Activated T-helper 1 cell treated with anti-CD3 and anti-CD28 coated beads, Interleukin-12 subunit alpha, Interleukin-12 subunit beta, Interleukin-2, Interleukin-4 antibody, amounts not matched to agents 30 ng/mL and 10 ng/mL and 1 ng/mL, durations not matched to agents 14 hours and 24 hours and 36 hours (primary cell): ENCODE measurements at regions of chr13 and their contacts with region 1.

Region 1: GRCh38 chr13:40922437-40923040 is 96.6 kb downstream of the ELF1 start:
- DNase-seq: no peak
- H3K4me3 Mint-ChIP-seq: peak overlapping the region; percentile 77
- H3K27ac Mint-ChIP-seq: peak overlapping the region; percentile 70
- H3K4me1 Mint-ChIP-seq: peaks cover 10% of the 10 kb centered on the region
- H3K27me3 Mint-ChIP-seq: peaks cover 1% of the 10 kb centered on the region

Region 2: GRCh38 chr13:40706439-40706838 is 216.1 kb before region 1 on chr13:
- intact Hi-C with region 1: no loop called
- DNase-seq: no peak
- H3K4me3 Mint-ChIP-seq: no peak overlapping the region
- H3K27ac Mint-ChIP-seq: no peak overlapping the region
- H3K4me1 Mint-ChIP-seq: peaks cover 13% of the 10 kb centered on the region
- H3K27me3 Mint-ChIP-seq: no peaks in the 10 kb centered on the region

Region 3: DNA sequence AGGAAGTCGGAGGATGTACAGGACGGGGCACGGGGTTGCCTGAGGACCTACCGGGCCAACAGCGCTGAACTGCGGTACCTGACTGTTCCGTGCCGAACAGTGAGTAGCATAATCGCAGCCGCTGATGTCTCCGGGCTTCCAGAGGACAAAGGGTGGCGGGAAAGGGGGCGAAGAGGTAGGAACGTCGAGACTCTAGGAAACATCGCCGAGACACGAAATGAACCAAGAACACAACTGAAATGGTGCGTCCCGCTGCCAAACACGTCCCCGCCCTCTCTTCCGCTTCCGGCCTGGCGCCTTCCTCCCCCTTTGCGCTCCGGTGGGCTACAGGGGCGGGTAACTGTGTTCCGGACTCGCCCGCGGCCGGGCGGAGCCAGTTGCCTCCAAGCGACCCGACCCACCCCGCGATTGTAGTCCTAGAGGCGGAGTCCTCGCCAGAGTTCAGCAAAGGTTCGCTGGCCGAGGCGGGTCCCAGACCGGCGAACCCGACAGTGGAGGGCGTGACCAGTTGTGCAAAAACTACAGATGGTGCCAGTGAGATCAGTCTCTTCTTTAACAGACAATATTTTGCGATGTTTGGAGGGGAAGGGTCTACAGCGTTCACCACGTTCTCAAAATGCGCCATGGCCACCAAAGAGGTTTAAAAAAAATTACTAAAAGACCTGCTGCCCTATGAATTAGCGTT is 151.5 kb before region 1 on chr13 and contains the start of gene MRPS31:
- intact Hi-C with region 1: loop called (anchors 1 kb)
- DNase-seq: peak; percentile 93
- H3K4me3 Mint-ChIP-seq: peak within 1 kb of the TSS; percentile 99
- H3K27ac Mint-ChIP-seq: peak within 1 kb of the TSS; percentile 98
- H3K4me1 Mint-ChIP-seq: peaks cover 29% of the 10 kb centered on the region
- H3K27me3 Mint-ChIP-seq: no peaks in the 10 kb centered on the region
- total RNA-seq, gene MRPS31: 41.6 and 42.6 TPM in 2 replicates

Region 4: GRCh38 chr13:40813661-40814454 is 108.7 kb before region 1 on chr13:
- intact Hi-C with region 1: loop called (anchors 5 kb)
- DNase-seq: no peak
- H3K4me3 Mint-ChIP-seq: no peak overlapping the region
- H3K27ac Mint-ChIP-seq: no peak overlapping the region
- H3K4me1 Mint-ChIP-seq: peaks cover 7% of the 10 kb centered on the region
- H3K27me3 Mint-ChIP-seq: no peaks in the 10 kb centered on the region

Region 5: DNA sequence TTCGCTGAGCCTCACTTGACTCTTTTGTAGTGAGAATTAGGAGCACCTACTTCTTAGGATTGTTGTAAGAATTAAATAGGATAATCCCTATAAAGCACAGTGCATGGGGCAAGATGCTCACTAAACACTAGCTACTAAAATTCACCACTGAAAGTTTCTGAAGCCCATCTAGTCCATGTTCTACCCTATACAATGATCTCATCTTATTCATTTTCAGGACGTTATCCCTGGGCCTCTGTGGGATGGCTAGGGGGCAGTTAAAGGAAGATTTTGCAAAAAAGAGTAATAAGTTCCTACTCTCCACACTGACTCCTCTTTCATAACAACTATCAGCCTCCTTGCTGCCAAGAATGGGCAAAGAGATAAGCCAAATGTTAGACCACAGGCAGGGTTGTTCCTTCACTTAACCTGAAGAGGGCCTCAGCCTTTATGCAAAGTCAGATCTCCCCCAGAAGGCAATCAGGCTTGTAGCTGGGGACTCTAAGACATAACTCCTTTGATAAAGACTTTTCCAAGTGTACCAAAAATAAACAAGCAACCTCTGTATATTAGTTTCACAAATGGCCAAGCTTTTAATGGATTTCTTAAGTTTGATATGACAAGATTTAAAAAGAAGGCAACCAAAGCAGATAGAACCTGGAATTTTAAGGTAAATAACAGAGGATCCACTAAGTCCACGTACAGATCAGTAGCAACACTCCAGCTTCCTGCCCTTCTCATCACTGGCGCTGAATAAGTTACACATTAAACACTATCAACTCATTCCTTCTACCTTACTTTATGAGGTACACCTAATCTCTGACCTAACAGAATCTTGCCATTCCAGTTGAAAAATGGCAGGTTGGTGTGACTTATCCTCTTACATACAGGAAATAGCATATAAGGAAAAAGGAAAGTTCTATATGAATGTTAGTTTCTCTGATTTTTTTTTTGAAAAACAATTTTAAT is 52.2 kb after region 1 on chr13:
- intact Hi-C with region 1: loop called (anchors 2 kb)
- DNase-seq: no peak
- H3K4me3 Mint-ChIP-seq: peak overlapping the region; percentile 45
- H3K27ac Mint-ChIP-seq: peak overlapping the region; percentile 18
- H3K4me1 Mint-ChIP-seq: peaks cover 94% of the 10 kb centered on the region
- H3K27me3 Mint-ChIP-seq: no peaks in the 10 kb centered on the region

Region 6: DNA sequence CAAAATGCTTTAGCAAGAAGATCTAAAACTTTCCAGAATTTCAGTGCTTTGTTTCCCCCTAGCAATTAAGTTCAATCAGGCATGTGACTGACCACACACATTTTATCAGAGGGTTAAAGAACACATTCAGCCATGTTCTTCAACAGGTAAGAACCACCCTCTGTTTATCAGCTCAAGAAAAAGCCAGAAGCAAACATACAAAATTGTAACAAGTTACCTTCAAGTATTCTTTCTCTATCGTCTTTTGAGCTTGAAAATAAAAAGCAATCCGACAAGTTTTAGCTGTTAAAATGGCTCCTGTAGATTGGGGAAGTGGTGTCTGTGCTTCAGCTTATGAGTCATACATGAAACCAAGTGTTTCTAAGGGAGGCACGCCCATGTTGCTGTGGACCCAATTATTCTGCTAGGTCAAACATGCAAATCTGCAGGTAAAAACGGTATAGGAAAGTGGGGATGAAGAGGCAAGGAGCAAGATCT is 96.5 kb after region 1 on chr13 and contains the start of gene ELF1:
- intact Hi-C with region 1: loop called (anchors 2 kb)
- DNase-seq: peak; percentile 49
- H3K4me3 Mint-ChIP-seq: peak within 1 kb of the TSS; percentile 91
- H3K27ac Mint-ChIP-seq: peak within 1 kb of the TSS; percentile 97
- H3K4me1 Mint-ChIP-seq: peaks cover 53% of the 10 kb centered on the region
- H3K27me3 Mint-ChIP-seq: no peaks in the 10 kb centered on the region
- total RNA-seq, gene ELF1: 75.3 and 76.8 TPM in 2 replicates

Region 7: DNA sequence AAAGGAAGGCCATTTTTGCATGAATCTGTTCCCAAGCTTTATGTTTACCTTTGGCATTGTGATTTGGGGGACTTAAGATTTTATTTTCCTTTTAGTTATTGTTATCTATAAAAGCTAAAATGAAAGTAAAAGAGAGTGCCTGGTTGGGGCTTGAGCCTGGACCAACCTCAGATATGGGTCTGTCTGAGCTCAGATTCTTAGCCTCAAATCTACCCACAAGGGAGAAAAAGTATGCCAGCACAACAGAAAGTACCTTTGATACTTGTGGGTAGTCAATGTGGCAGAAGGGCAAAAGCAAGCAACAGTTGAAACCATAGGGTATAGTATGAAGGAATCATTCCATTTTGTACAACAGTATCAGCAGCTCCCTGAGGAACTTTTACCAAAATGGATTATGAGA is 236.6 kb after region 1 on chr13:
- intact Hi-C with region 1: no loop called
- DNase-seq: no peak
- H3K4me3 Mint-ChIP-seq: no peak overlapping the region
- H3K27ac Mint-ChIP-seq: no peak overlapping the region
- H3K4me1 Mint-ChIP-seq: no peaks in the 10 kb centered on the region
- H3K27me3 Mint-ChIP-seq: peaks cover 4% of the 10 kb centered on the region

Region 8: GRCh38 chr13:41502673-41503072 is 580.1 kb after region 1 on chr13:
- intact Hi-C with region 1: no loop called
- DNase-seq: no peak
- H3K4me3 Mint-ChIP-seq: no peak overlapping the region
- H3K27ac Mint-ChIP-seq: no peak overlapping the region
- H3K4me1 Mint-ChIP-seq: peaks cover 58% of the 10 kb centered on the region
- H3K27me3 Mint-ChIP-seq: peaks cover 2% of the 10 kb centered on the region